Endothelial cell of umbilical vein (primary cell): ENCODE measurements at regions of chr21 and their contacts with region 1.

Region 1: DNA sequence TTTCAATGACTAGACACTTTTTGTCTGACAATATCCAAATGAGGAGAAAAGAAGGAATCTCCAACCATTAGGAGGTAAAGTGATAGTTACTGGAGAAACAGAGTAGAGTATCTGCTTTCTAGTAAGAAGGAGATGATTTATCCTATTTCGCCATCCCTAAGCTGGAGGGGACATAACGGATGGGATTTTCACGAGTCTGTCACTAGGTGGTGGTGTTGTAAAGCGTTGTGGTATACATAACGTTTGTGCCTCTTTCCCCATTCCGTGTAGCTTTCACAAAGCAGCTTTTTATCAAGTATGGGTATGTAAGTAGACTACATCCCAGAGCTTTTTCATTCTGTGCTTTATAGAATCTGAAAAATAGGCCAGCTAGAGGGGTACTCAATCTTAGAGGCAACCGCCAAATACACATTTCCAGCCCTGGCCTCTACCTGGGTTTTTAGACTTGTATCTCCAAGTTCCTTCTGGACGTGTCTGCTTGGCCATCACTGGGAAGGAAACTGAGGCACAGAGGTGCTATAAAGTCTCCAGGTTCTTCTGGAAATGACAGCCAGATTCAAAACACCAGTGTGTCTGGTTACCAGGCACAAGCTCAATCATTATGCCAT is 33.3 kb upstream of the FAM3B start:
- DNase-seq: peak; percentile 70
- H3K4me3 ChIP-seq: no peak overlapping the region
- H3K27ac ChIP-seq: no peak overlapping the region
- H3K4me1 ChIP-seq: no peaks in the 10 kb centered on the region
- H3K27me3 ChIP-seq: peaks cover 2 to 8% of the 10 kb centered on the region in 2 experiments
- CTCF ChIP-seq: peak; percentile 63 to 65
- POLR2A ChIP-seq: no peak

Region 2: DNA sequence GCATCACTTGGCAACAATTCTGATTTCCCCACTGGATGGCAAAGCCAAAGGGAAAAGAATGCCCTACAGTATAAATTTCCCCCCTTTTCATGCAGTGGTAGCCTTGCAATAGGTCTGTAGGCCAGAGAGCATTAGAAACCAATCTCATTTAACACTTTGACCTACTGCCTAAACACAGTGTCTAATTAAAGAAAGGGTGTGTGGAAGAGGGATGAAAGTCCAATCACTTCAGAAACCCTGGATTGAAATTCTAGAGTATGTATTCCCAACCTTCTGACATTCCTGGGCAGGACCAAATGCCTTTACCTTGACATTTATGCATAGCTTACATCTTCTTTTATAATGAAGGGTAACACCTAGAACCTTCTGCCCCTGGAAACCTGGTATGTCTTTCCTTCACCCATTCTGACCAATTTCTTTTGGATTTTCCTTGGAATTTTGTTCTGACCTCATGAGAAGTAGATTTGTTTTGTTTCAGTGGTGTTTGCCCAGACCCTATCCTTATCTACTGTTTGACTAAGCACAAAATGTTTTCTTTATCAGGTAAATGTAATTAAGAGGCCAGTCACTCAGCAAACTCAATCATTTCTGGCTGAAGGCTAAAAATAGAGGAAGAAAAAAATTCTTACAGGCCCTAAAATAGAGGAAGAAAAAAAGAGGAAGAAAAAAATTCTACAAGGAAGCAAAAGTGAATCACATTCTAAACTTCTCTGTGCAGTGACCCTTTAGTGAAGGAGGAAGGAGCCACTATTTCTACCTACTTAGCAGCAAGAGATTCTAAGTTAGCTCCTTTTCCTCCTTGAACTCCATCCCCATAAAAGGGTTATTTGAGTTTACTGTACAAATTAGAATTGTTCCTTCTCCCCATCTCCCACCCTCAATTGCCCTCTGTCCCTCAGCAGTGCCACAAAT is 306.9 kb before region 1 on chr21:
- CTCF ChIA-PET with region 1: no interaction called
- POLR2A ChIA-PET with region 1: no interaction called
- dilution Hi-C with region 1: no loop called
- intact Hi-C with region 1: no loop called
- DNase-seq: no peak
- H3K4me3 ChIP-seq: no peak overlapping the region
- H3K27ac ChIP-seq: no peak overlapping the region
- H3K4me1 ChIP-seq: no peaks in the 10 kb centered on the region
- H3K27me3 ChIP-seq: no peaks in the 10 kb centered on the region
- CTCF ChIP-seq: no peak
- POLR2A ChIP-seq: no peak

Region 3: GRCh38 chr21:41167348-41168342 is 115.7 kb before region 1 on chr21 and contains the start of gene BACE2:
- CTCF ChIA-PET with region 1: interaction called, 34 read pairs
- POLR2A ChIA-PET with region 1: no interaction called
- dilution Hi-C with region 1: no loop called
- intact Hi-C with region 1: no loop called
- DNase-seq: peak; percentile 72
- H3K4me3 ChIP-seq: peak within 1 kb of the TSS; percentile 77 to 95 (median 83)
- H3K27ac ChIP-seq: peak within 1 kb of the TSS; percentile 70
- H3K4me1 ChIP-seq: peaks cover 32% of the 10 kb centered on the region
- H3K27me3 ChIP-seq: no peaks in the 10 kb centered on the region
- CTCF ChIP-seq: peak; percentile 53 to 63
- POLR2A ChIP-seq: no peak
- total RNA-seq, gene BACE2: 128 and 184 TPM in 2 replicates

Region 4: GRCh38 chr21:41210401-41211059 is 72.8 kb before region 1 on chr21:
- CTCF ChIA-PET with region 1: no interaction called
- POLR2A ChIA-PET with region 1: no interaction called
- dilution Hi-C with region 1: no loop called
- intact Hi-C with region 1: no loop called
- DNase-seq: no peak
- H3K4me3 ChIP-seq: no peak overlapping the region
- H3K27ac ChIP-seq: no peak overlapping the region
- H3K4me1 ChIP-seq: peaks cover 2% of the 10 kb centered on the region
- H3K27me3 ChIP-seq: no peaks in the 10 kb centered on the region
- CTCF ChIP-seq: no peak
- POLR2A ChIP-seq: no peak

Region 5: GRCh38 chr21:41321211-41321907 is 38.0 kb after region 1 on chr21:
- CTCF ChIA-PET with region 1: interaction called, 10 read pairs
- POLR2A ChIA-PET with region 1: no interaction called
- dilution Hi-C with region 1: no loop called
- intact Hi-C with region 1: no loop called
- DNase-seq: no peak
- H3K4me3 ChIP-seq: no peak overlapping the region
- H3K27ac ChIP-seq: no peak overlapping the region
- H3K4me1 ChIP-seq: no peaks in the 10 kb centered on the region
- H3K27me3 ChIP-seq: peaks cover 6 to 15% of the 10 kb centered on the region in 2 experiments
- CTCF ChIP-seq: no peak
- POLR2A ChIP-seq: no peak

Region 6: GRCh38 chr21:41468871-41469270 is 185.6 kb after region 1 on chr21:
- CTCF ChIA-PET with region 1: interaction called, 13 read pairs
- POLR2A ChIA-PET with region 1: no interaction called
- dilution Hi-C with region 1: no loop called
- intact Hi-C with region 1: no loop called
- DNase-seq: no peak
- H3K4me3 ChIP-seq: no peak overlapping the region
- H3K27ac ChIP-seq: no peak overlapping the region
- H3K4me1 ChIP-seq: no peaks in the 10 kb centered on the region
- H3K27me3 ChIP-seq: no peaks in the 10 kb centered on the region
- CTCF ChIP-seq: no peak
- POLR2A ChIP-seq: no peak

Region 7: GRCh38 chr21:41816220-41817165 is 533.2 kb after region 1 on chr21:
- CTCF ChIA-PET with region 1: interaction called, 38 read pairs
- POLR2A ChIA-PET with region 1: no interaction called
- dilution Hi-C with region 1: no loop called
- intact Hi-C with region 1: loop called (anchors 2 kb)
- DNase-seq: peak; percentile 54
- H3K4me3 ChIP-seq: no peak overlapping the region
- H3K27ac ChIP-seq: no peak overlapping the region
- H3K4me1 ChIP-seq: no peaks in the 10 kb centered on the region
- H3K27me3 ChIP-seq: no peaks in the 10 kb centered on the region
- CTCF ChIP-seq: peak; percentile 82 to 90
- POLR2A ChIP-seq: no peak